GM12878 (cell line): ENCODE measurements at regions of chr5 and their contacts with region 1.

Region 1: GRCh38 chr5:80083101-80083890 is 48.1 kb downstream of the THBS4 start:
- DNase-seq: no peak
- ATAC-seq: peak; percentile 92
- H3K4me3 ChIP-seq: no peak overlapping the region
- H3K27ac ChIP-seq: no peak overlapping the region
- H3K4me1 ChIP-seq: no peaks in the 10 kb centered on the region
- H3K27me3 ChIP-seq: no peaks in the 10 kb centered on the region
- CTCF ChIP-seq: peak; percentile 41 to 69 (median 66); a peak in 5 of 6 replicates
- EP300 ChIP-seq: no peak
- POLR2A ChIP-seq: no peak
- RAD21 ChIP-seq: peak; percentile 81

Region 2: DNA sequence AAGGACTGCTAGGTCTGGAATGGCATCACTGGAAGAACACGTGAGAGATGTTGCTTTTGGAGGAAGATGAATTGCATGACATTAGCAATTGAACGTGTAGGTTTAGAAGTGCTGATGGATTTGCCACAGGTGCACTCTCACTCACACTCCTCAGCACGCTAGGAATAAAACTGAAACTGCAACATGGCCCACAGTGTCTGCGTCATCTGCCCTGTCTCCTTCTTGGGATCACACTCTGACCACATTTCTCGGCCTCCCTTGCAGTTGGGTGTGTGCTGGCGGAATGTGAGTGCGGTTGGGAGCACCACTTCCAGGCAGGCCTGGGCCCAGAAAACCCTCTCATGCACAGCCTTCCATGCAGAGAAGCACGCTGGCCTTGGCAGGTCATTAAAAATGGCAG is 1281.9 kb before region 1 on chr5:
- CTCF ChIA-PET with region 1: no interaction called
- POLR2A ChIA-PET with region 1: no interaction called
- RAD21 ChIA-PET with region 1: no interaction called
- SMC1A ChIA-PET with region 1: no interaction called
- in situ Hi-C with region 1: no loop called
- intact Hi-C with region 1: no loop called
- DNase-seq: no peak
- ATAC-seq: no peak
- H3K4me3 ChIP-seq: no peak overlapping the region
- H3K27ac ChIP-seq: no peak overlapping the region
- H3K4me1 ChIP-seq: no peaks in the 10 kb centered on the region
- H3K27me3 ChIP-seq: no peaks in the 10 kb centered on the region
- CTCF ChIP-seq: no peak
- EP300 ChIP-seq: no peak
- POLR2A ChIP-seq: no peak
- RAD21 ChIP-seq: no peak

Region 3: GRCh38 chr5:79702606-79703382 is 380.5 kb before region 1 on chr5:
- CTCF ChIA-PET with region 1: interaction called, 3 read pairs
- POLR2A ChIA-PET with region 1: no interaction called
- RAD21 ChIA-PET with region 1: no interaction called
- SMC1A ChIA-PET with region 1: interaction called, 3 read pairs
- in situ Hi-C with region 1: no loop called
- intact Hi-C with region 1: loop called (anchors 5 kb)
- DNase-seq: no peak
- ATAC-seq: peak; percentile 51
- H3K4me3 ChIP-seq: no peak overlapping the region
- H3K27ac ChIP-seq: no peak overlapping the region
- H3K4me1 ChIP-seq: peaks cover 10% of the 10 kb centered on the region
- H3K27me3 ChIP-seq: no peaks in the 10 kb centered on the region
- CTCF ChIP-seq: peak; percentile 32 to 61 (median 46); a peak in 5 of 6 replicates
- EP300 ChIP-seq: no peak
- POLR2A ChIP-seq: no peak
- RAD21 ChIP-seq: peak; percentile 53

Region 4: DNA sequence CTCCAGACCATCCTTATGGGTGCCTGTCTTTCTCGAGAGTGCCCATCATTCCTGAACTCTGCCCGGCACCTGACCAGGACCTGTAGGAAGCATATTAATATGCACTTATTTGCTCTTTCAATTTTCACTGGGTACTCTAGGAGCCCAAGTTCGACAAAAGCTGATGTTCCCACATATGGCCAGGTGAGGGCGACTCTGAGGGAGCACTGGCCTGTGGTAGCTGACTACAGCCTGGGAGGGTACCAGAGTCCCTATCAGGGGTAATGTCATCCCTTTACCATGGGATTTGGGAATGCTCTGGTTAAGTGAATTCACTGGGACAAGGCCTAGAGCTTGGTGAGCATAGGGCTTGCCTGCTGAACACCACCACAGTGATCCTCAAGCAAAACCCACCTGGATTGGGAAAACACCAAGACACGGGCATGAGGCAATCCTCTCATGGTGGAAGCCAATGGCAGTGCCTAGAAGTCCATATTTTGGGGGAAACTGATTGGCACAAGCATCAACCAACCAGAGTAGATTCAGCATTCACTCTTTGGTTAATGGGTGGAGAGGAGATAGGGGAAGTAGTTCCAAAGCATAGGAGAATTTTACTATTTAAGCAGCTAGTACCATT is 204.5 kb before region 1 on chr5:
- CTCF ChIA-PET with region 1: interaction called, 20 read pairs
- POLR2A ChIA-PET with region 1: interaction called, 13 read pairs
- RAD21 ChIA-PET with region 1: interaction called, 17 read pairs
- SMC1A ChIA-PET with region 1: interaction called, 15 read pairs
- in situ Hi-C with region 1: loop called (anchors 10 kb)
- intact Hi-C with region 1: loop called (anchors 2 kb)
- DNase-seq: no peak
- ATAC-seq: peak; percentile 61
- H3K4me3 ChIP-seq: no peak overlapping the region
- H3K27ac ChIP-seq: no peak overlapping the region
- H3K4me1 ChIP-seq: no peaks in the 10 kb centered on the region
- H3K27me3 ChIP-seq: peaks cover 0 to 2% of the 10 kb centered on the region in 2 experiments; a peak in 1 of 4 replicates
- CTCF ChIP-seq: peak; percentile 37 to 57 (median 52); a peak in 5 of 6 replicates
- EP300 ChIP-seq: no peak
- POLR2A ChIP-seq: no peak
- RAD21 ChIP-seq: peak; percentile 43

Region 5: DNA sequence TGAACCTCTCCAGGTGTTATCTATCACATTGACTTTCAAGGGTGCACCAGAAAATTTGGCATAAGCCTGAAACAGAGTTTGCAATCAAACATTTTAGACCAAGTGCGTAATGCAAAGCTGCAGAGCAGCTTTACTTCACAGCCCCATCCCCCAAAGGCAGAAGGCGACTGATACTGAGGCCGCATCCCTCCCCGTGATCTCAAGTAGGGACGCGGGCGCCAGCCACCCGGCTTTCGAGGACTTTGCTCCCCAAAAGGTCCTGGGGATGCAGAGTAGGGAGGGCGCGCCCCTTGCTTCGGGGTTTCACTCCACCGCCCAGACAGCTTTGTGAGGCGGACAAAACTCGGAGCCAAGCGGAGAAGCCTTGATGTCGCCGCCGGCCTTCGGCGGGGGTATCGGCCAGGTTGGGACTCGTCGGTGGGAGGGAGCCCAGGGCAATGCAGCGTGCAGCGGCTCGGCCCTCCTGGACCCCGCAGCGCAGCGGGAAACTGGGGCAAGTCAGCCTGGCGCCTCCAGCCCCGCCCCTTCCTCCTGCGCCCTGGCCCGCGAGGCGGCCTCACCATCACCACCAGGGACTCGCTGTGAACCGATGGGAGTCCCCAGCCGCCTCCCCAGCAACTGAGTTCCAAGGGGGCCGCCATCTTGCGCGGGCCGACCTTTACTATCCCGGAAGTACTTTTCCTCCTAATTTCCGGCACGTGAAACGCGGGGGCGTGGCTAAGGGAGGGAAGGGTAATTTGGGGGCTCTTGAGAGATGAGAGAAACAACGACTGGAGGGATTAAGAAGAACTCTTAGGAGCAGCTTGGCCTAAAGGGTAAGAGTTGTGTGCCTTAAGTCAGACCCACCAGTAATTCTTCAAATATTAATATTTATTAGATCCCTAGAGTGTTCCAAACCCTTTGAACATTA is 92.4 kb before region 1 on chr5 and contains the start of gene MTX3:
- CTCF ChIA-PET with region 1: interaction called, 5 read pairs
- POLR2A ChIA-PET with region 1: no interaction called
- RAD21 ChIA-PET with region 1: interaction called, 9 read pairs
- SMC1A ChIA-PET with region 1: no interaction called
- in situ Hi-C with region 1: no loop called
- intact Hi-C with region 1: loop called (anchors 2 kb)
- DNase-seq: peak; percentile 57
- ATAC-seq: peak; percentile 96
- H3K4me3 ChIP-seq: peak within 1 kb of the TSS; percentile 86
- H3K27ac ChIP-seq: peak within 1 kb of the TSS; percentile 86
- H3K4me1 ChIP-seq: peaks cover 4% of the 10 kb centered on the region; the same call in 1 of the 2 replicates
- H3K27me3 ChIP-seq: no peaks in the 10 kb centered on the region
- CTCF ChIP-seq: no peak
- EP300 ChIP-seq: 0 out of 4 replicates have a peak, but pooled peaks of 1 of the 2 experiments have one; percentile 26
- POLR2A ChIP-seq: peak; percentile 93
- RAD21 ChIP-seq: no peak
- polyA plus RNA-seq, gene MTX3: 1.8 to 3.1 TPM

Region 6: DNA sequence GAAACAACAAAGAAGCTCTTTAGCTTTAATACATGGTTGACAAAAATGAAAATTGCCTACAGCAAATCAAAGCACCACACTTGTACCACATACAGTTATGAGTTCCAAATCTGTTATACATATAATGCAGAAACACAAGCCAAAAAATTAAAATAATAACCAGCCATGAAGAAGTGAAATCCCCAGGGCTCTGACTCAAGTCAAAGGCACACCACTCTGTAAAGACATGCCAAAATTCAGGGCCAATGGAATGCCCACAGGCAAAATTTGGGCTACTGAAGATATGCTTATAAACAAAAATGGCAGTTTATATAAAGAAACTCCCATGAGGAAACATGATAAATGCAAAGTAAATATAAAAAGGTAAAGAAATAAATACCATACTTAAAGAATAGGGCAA is 19.2 kb before region 1 on chr5:
- CTCF ChIA-PET with region 1: interaction called, 13 read pairs
- POLR2A ChIA-PET with region 1: no interaction called
- RAD21 ChIA-PET with region 1: interaction called, 3 read pairs
- SMC1A ChIA-PET with region 1: no interaction called
- in situ Hi-C with region 1: no loop called
- intact Hi-C with region 1: no loop called
- DNase-seq: no peak
- ATAC-seq: no peak
- H3K4me3 ChIP-seq: no peak overlapping the region
- H3K27ac ChIP-seq: no peak overlapping the region
- H3K4me1 ChIP-seq: no peaks in the 10 kb centered on the region
- H3K27me3 ChIP-seq: no peaks in the 10 kb centered on the region
- CTCF ChIP-seq: no peak
- EP300 ChIP-seq: no peak
- POLR2A ChIP-seq: no peak
- RAD21 ChIP-seq: no peak